MCF 10A (cell line): ENCODE measurements at regions of chr12 and their contacts with region 1.

Region 1: GRCh38 chr12:101939856-101940265 is 62.5 kb downstream of the DRAM1 start:
- DNase-seq: peak; percentile 81
- H3K4me3 Mint-ChIP-seq: no peak overlapping the region
- H3K27ac Mint-ChIP-seq: no peak overlapping the region
- H3K4me1 Mint-ChIP-seq: peaks cover 23% of the 10 kb centered on the region
- H3K27me3 Mint-ChIP-seq: no peaks in the 10 kb centered on the region
- CTCF ChIP-seq: peak; percentile 77

Region 2: GRCh38 chr12:100984821-100985220 is 955.0 kb before region 1 on chr12:
- CTCF ChIA-PET with region 1: no interaction called
- POLR2A ChIA-PET with region 1: no interaction called
- intact Hi-C with region 1: no loop called
- DNase-seq: no peak
- H3K4me3 Mint-ChIP-seq: no peak overlapping the region
- H3K27ac Mint-ChIP-seq: no peak overlapping the region
- H3K4me1 Mint-ChIP-seq: peaks cover 6% of the 10 kb centered on the region
- H3K27me3 Mint-ChIP-seq: no peaks in the 10 kb centered on the region
- CTCF ChIP-seq: no peak

Region 3: DNA sequence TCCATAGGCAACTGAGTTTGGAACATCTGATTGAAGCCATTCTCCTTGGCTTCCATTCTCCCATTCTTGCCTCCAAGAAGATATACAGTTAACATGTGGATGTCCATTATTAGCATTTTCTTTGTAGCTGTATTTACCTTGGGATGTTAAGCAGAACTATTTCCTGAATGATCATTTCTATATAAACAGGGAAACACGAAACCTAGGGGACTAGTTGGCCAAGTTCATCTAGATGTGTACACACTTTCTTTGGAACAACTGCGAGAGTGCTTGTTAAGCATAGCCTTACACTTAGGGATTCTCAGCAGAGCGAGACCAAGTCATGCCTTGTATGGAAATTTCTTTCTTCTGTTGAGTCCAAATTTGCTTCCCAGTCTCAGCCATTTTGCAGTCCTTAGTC is 20.4 kb before region 1 on chr12:
- CTCF ChIA-PET with region 1: interaction called, 35 read pairs
- POLR2A ChIA-PET with region 1: interaction called, 7 read pairs
- intact Hi-C with region 1: loop called (anchors 1 kb)
- DNase-seq: no peak
- H3K4me3 Mint-ChIP-seq: no peak overlapping the region
- H3K27ac Mint-ChIP-seq: no peak overlapping the region
- H3K4me1 Mint-ChIP-seq: peaks cover 17% of the 10 kb centered on the region
- H3K27me3 Mint-ChIP-seq: no peaks in the 10 kb centered on the region
- CTCF ChIP-seq: no peak

Region 4: DNA sequence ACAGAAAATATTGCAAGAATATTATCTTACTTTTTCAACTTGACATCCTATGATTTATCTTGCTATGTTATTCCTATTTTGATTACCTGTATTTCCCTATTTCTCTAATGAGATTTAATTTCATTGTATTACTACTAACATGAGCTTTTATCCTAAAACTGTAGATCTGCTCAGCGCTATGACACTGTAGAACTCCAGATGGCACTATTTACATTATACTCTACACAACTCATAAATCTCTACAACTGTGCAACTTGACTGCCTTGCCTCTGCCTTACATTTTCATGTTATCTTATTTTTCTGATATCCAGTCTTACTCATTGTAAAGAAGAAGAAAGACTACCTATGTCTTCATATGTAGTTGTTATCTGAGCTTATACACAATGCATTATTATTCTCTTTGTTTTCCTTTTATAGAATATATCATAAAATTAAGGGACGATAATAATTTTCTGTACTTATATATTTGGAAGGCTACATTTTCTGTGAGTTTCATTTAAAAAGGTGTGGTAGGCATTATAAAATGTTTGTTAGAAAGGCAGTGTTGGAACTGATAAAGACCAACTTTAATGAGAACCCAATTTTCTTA is 155.9 kb after region 1 on chr12:
- CTCF ChIA-PET with region 1: interaction called, 5 read pairs
- POLR2A ChIA-PET with region 1: no interaction called
- intact Hi-C with region 1: loop called (anchors 5 kb)
- DNase-seq: peak; percentile 23
- H3K4me3 Mint-ChIP-seq: no peak overlapping the region
- H3K27ac Mint-ChIP-seq: no peak overlapping the region
- H3K4me1 Mint-ChIP-seq: peaks cover 7% of the 10 kb centered on the region
- H3K27me3 Mint-ChIP-seq: no peaks in the 10 kb centered on the region
- CTCF ChIP-seq: peak; percentile 39

Region 5: GRCh38 chr12:102740141-102740955 is 800.5 kb after region 1 on chr12:
- CTCF ChIA-PET with region 1: interaction called, 19 read pairs
- POLR2A ChIA-PET with region 1: no interaction called
- intact Hi-C with region 1: loop called (anchors 1 kb)
- DNase-seq: peak; percentile 47
- H3K4me3 Mint-ChIP-seq: no peak overlapping the region
- H3K27ac Mint-ChIP-seq: no peak overlapping the region
- H3K4me1 Mint-ChIP-seq: no peaks in the 10 kb centered on the region
- H3K27me3 Mint-ChIP-seq: no peaks in the 10 kb centered on the region
- CTCF ChIP-seq: peak; percentile 30